ENCODE measurements at regions of chr2 and their contacts with region 1.

Region 1: DNA sequence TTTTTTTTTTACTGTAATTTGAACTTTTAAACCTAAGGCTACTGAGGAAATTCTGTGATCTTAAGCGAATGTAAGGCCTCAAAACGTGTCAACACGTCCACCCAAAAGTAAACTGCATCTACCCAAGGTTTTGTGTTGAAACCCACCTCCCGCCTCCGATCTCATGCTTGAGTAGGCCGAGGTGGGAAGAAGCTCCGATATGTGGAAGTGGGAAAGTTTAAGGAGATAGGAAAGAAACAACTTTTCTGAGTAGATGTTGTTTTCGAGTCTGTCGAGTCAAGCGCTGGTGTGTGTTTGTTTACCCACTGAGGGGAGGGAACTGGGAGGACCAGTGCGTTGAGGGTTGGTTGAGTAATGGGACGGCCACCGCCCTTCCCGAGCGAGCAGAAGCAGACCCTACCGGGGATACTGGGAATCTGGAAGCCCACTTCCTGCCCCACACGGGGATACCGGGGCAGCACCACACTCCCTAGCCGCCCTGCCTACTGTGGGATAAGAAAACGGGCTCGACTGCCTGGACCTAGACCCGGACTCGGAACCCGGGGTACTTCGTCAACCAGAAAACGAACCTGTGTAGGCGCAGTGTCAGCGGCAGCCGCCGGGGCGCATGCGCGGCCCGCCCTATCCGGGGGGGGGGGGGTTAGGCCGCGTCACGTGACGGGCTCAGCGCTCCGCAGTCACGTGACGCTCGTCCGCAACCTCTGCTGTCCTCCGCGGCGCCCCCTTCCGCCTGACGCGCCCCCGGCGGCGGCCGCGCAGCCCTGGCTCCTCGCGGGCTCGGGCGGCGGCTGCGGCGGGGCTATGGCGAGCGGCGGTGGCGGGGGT is at the start of gene RETREG2:
- DNase-seq: peak; percentile 90
- H3K4me3 Mint-ChIP-seq: peak within 1 kb of the TSS; percentile 82
- H3K27ac Mint-ChIP-seq: peak within 1 kb of the TSS; percentile 93
- H3K4me1 Mint-ChIP-seq: no peaks in the 10 kb centered on the region
- H3K27me3 Mint-ChIP-seq: no peaks in the 10 kb centered on the region
- CTCF ChIP-seq: peak; percentile 32
- total RNA-seq, gene RETREG2: 49.3 and 64.5 TPM in 2 replicates

Region 2: DNA sequence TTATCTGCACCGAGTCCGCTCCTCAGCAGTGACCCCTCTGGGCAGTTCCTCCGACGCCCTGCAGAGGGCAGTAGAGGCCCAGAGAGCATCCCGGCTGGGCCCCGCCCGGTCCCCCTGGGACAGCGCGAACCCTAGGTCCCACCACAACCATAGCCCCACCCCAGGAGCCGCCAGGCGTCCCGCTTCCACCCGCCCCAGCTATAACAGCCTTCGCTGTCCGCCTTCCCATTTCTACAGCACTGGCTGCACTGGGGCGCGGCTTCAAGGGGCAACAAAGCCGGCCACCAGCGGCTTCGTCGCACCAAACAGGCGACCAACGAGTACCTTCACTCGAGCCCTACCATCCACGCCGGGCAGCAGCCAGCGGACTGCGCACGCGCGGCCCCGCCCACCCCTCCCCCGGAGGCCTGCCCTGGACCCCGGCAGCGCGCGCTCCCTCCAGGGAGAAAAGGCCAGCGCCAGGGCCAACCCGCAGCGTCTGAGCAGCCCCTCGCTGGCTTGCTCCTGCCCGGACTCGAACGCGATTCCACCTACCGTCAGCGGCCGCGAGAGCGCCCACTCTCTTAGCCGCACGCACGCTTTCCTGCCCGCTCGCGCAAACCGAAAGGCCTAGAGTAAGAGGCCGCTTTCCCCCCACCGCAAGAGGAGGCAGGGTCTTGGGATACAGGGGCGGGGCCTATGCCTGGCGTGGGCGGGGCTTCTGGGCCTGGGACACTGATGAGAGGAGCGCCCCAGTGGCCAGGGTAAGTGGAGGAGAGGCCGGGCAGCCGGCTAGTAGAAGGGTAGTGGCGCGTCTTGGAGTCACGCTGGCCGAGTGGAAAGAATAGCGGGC is 17.4 kb before region 1 on chr2 and contains the start of gene NHEJ1:
- CTCF ChIA-PET with region 1: interaction called, 82 read pairs
- POLR2A ChIA-PET with region 1: interaction called, 19 read pairs
- intact Hi-C with region 1: loop called (anchors 1 kb)
- DNase-seq: peak; percentile 95
- H3K4me3 Mint-ChIP-seq: peak within 1 kb of the TSS; percentile 77
- H3K27ac Mint-ChIP-seq: peak within 1 kb of the TSS; percentile 37
- H3K4me1 Mint-ChIP-seq: peaks cover 14% of the 10 kb centered on the region
- H3K27me3 Mint-ChIP-seq: no peaks in the 10 kb centered on the region
- CTCF ChIP-seq: peak; percentile 96
- total RNA-seq, gene NHEJ1: 7.5 and 11.5 TPM in 2 replicates

Region 3: GRCh38 chr2:219218732-219219701 is 41.3 kb after region 1 on chr2 and contains the start of gene ABCB6:
- CTCF ChIA-PET with region 1: interaction called, 5 read pairs
- POLR2A ChIA-PET with region 1: interaction called, 49 read pairs
- intact Hi-C with region 1: no loop called
- DNase-seq: peak; percentile 91
- H3K4me3 Mint-ChIP-seq: peak within 1 kb of the TSS; percentile 82
- H3K27ac Mint-ChIP-seq: peak within 1 kb of the TSS; percentile 83
- H3K4me1 Mint-ChIP-seq: no peaks in the 10 kb centered on the region
- H3K27me3 Mint-ChIP-seq: no peaks in the 10 kb centered on the region
- CTCF ChIP-seq: no peak
- total RNA-seq, gene ABCB6: 13.8 and 18.8 TPM in 2 replicates

Region 4: GRCh38 chr2:219245148-219245898 is 67.6 kb after region 1 on chr2 and contains the starts of genes GLB1L and STK16:
- CTCF ChIA-PET with region 1: interaction called, 4 read pairs
- POLR2A ChIA-PET with region 1: interaction called, 55 read pairs
- intact Hi-C with region 1: no loop called
- DNase-seq: peak; percentile 87
- H3K4me3 Mint-ChIP-seq: peak within 1 kb of the TSS; percentile 80
- H3K27ac Mint-ChIP-seq: peak within 1 kb of the TSS; percentile 85
- H3K4me1 Mint-ChIP-seq: peaks cover 21% of the 10 kb centered on the region
- H3K27me3 Mint-ChIP-seq: no peaks in the 10 kb centered on the region
- CTCF ChIP-seq: no peak
- total RNA-seq, gene GLB1L: 4.9 and 7.5 TPM in 2 replicates
- total RNA-seq, gene STK16: 33.4 and 42.7 TPM in 2 replicates

Region 5: GRCh38 chr2:219278655-219279516 is 101.1 kb after region 1 on chr2 and contains the start of gene DNAJB2:
- CTCF ChIA-PET with region 1: interaction called, 6 read pairs
- POLR2A ChIA-PET with region 1: interaction called, 34 read pairs
- intact Hi-C with region 1: loop called (anchors 5 kb)
- DNase-seq: peak; percentile 97
- H3K4me3 Mint-ChIP-seq: peak within 1 kb of the TSS; percentile 86
- H3K27ac Mint-ChIP-seq: peak within 1 kb of the TSS; percentile 86
- H3K4me1 Mint-ChIP-seq: peaks cover 42% of the 10 kb centered on the region
- H3K27me3 Mint-ChIP-seq: no peaks in the 10 kb centered on the region
- CTCF ChIP-seq: no peak
- total RNA-seq, gene DNAJB2: 58.2 and 59.8 TPM in 2 replicates

Region 6: GRCh38 chr2:219388127-219388844 is 210.5 kb after region 1 on chr2:
- CTCF ChIA-PET with region 1: no interaction called
- POLR2A ChIA-PET with region 1: interaction called, 15 read pairs
- intact Hi-C with region 1: no loop called
- DNase-seq: peak; percentile 87
- H3K4me3 Mint-ChIP-seq: peak overlapping the region; percentile 96
- H3K27ac Mint-ChIP-seq: peak overlapping the region; percentile 97
- H3K4me1 Mint-ChIP-seq: no peaks in the 10 kb centered on the region
- H3K27me3 Mint-ChIP-seq: no peaks in the 10 kb centered on the region
- CTCF ChIP-seq: no peak

Measured in MCF 10A (cell line).